Activated B cell treated with CpG ODN at 0.5 μM for 24 hours (primary cell): ENCODE measurements at regions of chrX and their contacts with region 1.

Region 1: DNA sequence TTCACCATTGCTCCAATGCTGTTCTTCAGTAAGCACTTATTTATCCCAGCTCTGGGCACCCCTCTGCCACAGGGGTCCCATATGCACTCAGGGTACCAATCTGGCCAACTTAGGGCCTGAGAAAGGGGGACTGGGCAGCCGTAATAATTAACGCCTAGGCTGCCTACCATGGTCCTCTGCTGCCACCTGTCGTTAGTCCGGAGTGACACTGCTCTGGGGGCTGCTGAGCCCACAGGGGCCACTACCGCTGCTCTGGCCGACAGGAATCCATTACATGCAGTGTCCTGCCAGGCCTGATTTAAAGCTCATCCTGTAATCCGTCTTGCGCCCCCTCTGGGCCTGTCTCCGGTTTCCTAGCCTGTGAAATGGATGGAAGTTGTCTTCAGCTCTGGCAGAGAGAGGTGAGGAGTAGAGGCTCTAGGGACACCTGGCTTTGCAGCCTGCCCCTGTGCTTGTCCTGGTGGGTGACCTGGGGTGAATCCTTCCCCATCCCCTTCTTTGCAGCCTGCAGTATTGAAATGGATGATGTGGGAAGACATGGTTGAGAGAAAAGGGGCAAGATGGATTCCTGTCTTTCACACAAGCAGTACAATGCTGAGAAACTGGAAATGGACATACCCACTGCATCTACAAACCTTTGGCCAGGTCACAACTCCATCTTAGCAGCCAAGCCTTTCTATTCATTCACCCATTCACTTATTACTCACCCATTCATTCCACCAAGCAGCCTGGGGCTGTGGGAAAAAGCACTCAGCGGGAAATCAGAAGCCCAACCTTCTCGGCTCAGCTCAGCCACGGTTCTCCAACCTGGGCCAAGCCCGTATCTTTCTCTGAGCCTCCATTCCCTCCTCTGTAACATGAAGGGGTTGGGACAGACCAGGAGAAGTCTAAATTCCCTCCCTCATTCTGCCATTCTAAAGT is 116.3 kb upstream of the NALF2 start:
- DNase-seq: peak; percentile 14
- ATAC-seq: peak; percentile 18
- H3K4me3 Mint-ChIP-seq: no peak overlapping the region
- H3K27ac Mint-ChIP-seq: no peak overlapping the region
- H3K4me1 Mint-ChIP-seq: no peaks in the 10 kb centered on the region
- H3K27me3 Mint-ChIP-seq: peaks cover 3% of the 10 kb centered on the region
- CTCF ChIP-seq: no peak

Region 2: DNA sequence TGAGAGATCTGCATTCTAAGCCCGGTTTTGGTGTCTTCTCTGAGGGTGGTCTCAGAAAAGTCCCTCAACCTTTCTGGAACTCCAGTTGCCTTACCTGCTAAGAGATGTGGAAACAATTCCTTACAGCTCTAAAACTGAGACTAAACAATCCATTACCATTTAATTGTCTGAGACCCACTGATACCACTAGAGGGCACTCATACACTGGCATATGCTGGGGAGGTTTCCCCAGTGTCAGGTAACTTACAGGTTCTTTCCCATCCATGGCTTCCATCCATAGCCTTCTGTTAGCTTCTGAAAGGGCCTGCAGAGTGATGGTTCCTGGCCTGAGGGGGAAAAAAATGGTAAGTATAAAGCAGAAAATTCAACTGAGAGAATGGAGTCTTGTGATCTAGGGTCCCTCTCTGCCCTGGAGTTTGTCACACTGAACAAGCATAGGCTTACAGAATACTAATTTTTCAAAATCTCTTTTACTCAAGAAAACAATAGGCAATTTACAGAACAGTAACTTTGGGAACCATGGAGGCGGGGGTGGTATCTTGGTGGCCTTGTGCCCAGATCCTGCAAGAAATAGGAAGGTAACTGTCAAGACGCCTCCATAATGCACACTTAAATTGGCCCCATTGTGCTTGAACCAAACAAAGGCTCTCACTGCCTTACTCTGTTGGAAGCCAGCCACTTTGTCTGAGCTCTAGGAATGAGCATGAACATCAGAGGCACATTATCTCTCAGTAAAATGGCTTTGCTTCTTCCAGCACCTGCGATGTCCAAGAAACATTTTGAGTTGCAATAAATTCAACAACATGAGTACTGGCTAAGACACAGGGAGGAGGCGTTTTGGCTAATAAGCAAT is 1190.7 kb before region 1 on chrX:
- CTCF ChIA-PET with region 1: no interaction called
- POLR2A ChIA-PET with region 1: no interaction called
- intact Hi-C with region 1: loop called (anchors 5 kb)
- DNase-seq: no peak
- ATAC-seq: no peak
- H3K4me3 Mint-ChIP-seq: no peak overlapping the region
- H3K27ac Mint-ChIP-seq: no peak overlapping the region
- H3K4me1 Mint-ChIP-seq: no peaks in the 10 kb centered on the region
- H3K27me3 Mint-ChIP-seq: no peaks in the 10 kb centered on the region
- CTCF ChIP-seq: no peak

Region 3: DNA sequence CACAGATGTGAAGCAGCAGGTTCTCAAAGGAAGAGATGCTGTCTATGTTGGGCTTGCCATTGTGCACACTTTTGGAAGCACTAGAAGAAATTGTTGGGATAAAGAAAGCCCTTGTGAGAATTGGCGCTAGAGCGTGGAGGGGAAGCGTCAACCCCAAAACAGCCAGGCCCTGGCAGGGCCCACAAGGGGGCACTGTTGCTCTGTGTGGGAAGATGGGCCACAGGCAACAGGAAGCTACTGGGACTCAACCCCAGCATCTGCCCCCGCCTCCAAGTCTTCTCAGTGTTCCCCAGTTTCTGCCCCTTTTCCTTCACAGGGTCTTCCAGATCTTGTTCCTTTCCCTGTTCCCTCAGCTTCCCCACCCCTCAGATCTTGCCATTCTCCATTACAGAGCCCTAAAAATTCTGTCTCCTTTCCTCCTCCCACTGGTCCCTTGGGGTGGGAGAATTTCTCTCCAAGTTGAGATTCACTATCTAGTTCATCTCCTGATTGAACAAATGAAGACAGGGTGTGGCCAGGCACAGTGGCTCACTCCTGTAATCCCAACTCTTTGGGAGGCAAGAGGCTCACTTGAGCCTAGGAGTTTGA is 654.8 kb before region 1 on chrX:
- CTCF ChIA-PET with region 1: no interaction called
- POLR2A ChIA-PET with region 1: no interaction called
- intact Hi-C with region 1: loop called (anchors 5 kb)
- DNase-seq: peak; percentile 27
- ATAC-seq: no peak
- H3K4me3 Mint-ChIP-seq: no peak overlapping the region
- H3K27ac Mint-ChIP-seq: no peak overlapping the region
- H3K4me1 Mint-ChIP-seq: no peaks in the 10 kb centered on the region
- H3K27me3 Mint-ChIP-seq: peaks cover 2% of the 10 kb centered on the region
- CTCF ChIP-seq: no peak

Region 4: GRCh38 chrX:68912113-68912512 is 475.7 kb before region 1 on chrX:
- CTCF ChIA-PET with region 1: no interaction called
- POLR2A ChIA-PET with region 1: no interaction called
- intact Hi-C with region 1: no loop called
- DNase-seq: no peak
- ATAC-seq: no peak
- H3K4me3 Mint-ChIP-seq: no peak overlapping the region
- H3K27ac Mint-ChIP-seq: no peak overlapping the region
- H3K4me1 Mint-ChIP-seq: no peaks in the 10 kb centered on the region
- H3K27me3 Mint-ChIP-seq: peaks cover 5% of the 10 kb centered on the region
- CTCF ChIP-seq: no peak

Region 5: GRCh38 chrX:69466546-69466945 is 78.7 kb after region 1 on chrX:
- CTCF ChIA-PET with region 1: no interaction called
- POLR2A ChIA-PET with region 1: no interaction called
- intact Hi-C with region 1: no loop called
- DNase-seq: no peak
- ATAC-seq: no peak
- H3K4me3 Mint-ChIP-seq: no peak overlapping the region
- H3K27ac Mint-ChIP-seq: no peak overlapping the region
- H3K4me1 Mint-ChIP-seq: no peaks in the 10 kb centered on the region
- H3K27me3 Mint-ChIP-seq: peaks cover 2% of the 10 kb centered on the region
- CTCF ChIP-seq: no peak

Region 6: GRCh38 chrX:69808375-69808774 is 420.5 kb after region 1 on chrX:
- CTCF ChIA-PET with region 1: no interaction called
- POLR2A ChIA-PET with region 1: no interaction called
- intact Hi-C with region 1: no loop called
- DNase-seq: no peak
- ATAC-seq: no peak
- H3K4me3 Mint-ChIP-seq: no peak overlapping the region
- H3K27ac Mint-ChIP-seq: no peak overlapping the region
- H3K4me1 Mint-ChIP-seq: no peaks in the 10 kb centered on the region
- H3K27me3 Mint-ChIP-seq: no peaks in the 10 kb centered on the region
- CTCF ChIP-seq: no peak